ENCODE measurements at regions of chr10 and their contacts with region 1.

Region 1: DNA sequence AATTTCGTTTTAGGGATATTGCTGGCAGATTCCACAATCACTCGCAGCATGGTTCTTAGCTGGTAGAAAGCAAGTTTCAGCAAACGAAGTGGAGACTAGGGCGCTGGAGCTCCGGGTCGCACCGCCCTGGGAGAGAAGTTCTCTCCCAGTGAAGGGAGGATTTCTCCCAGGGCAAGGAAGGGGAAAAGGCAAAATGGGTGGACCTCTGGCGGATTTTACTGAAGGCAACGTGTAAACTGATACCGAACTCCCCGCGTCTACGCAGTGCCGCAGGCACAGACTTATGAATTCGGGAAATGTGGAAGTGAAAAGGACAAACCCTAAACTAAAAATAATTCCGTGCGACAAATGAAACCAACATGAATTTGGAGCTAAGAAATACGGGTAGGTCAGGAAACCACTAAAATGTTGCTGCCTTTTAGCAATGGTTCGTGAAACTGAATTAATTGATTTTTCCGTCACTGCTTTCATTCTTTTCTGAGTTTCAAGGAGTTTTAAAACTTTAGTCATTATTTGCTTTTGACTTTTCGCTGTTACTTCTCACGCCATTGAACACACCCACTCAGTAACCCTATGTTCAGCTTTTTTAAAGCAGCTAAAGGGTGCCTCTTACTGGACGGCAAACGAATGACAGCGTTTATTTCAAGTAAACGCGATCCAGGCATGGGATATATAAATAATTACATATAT is at the start of gene MYOF:
- DNase-seq: peak in 4 of 5 donors; percentile 15 to 58 (median 48)
- H3K4me3 ChIP-seq: peak within 1 kb of the TSS; percentile 42
- H3K4me3 Mint-ChIP-seq: peak within 1 kb of the TSS; percentile 78 to 90 (median 84)
- H3K27ac ChIP-seq: no peak within 1 kb of the TSS
- H3K27ac Mint-ChIP-seq: peak within 1 kb of the TSS in 3 of 8 donors; percentile 2 to 8 (median 8)
- H3K4me1 ChIP-seq: peaks cover 6% of the 10 kb centered on the region
- H3K4me1 Mint-ChIP-seq: peaks cover 7 to 12% (median 11%) of the 10 kb centered on the region in 3 donors
- H3K27me3 ChIP-seq: peaks cover 10% of the 10 kb centered on the region
- H3K27me3 Mint-ChIP-seq: peaks cover 21 to 38% of the 10 kb centered on the region in 2 donors
- total RNA-seq, gene MYOF: 57.0 to 62.8 TPM

Region 2: GRCh38 chr10:93368210-93368609 is 114.1 kb before region 1 on chr10:
- CTCF ChIA-PET with region 1: interaction called, 220 read pairs
- POLR2A ChIA-PET with region 1: no interaction called
- DNase-seq: no peak
- H3K4me3 ChIP-seq: no peak overlapping the region
- H3K4me3 Mint-ChIP-seq: no peak overlapping the region
- H3K27ac ChIP-seq: no peak overlapping the region
- H3K27ac Mint-ChIP-seq: no peak overlapping the region
- H3K4me1 ChIP-seq: no peaks in the 10 kb centered on the region
- H3K4me1 Mint-ChIP-seq: peaks cover 0 to 4% (median 3%) of the 10 kb centered on the region in 3 donors
- H3K27me3 ChIP-seq: no peaks in the 10 kb centered on the region
- H3K27me3 Mint-ChIP-seq: no peaks in the 10 kb centered on the region

Region 3: GRCh38 chr10:93386631-93387369 is 95.5 kb before region 1 on chr10:
- CTCF ChIA-PET with region 1: interaction called, 220 read pairs
- POLR2A ChIA-PET with region 1: no interaction called
- DNase-seq: peak in 2 of 5 donors; percentile 4 to 45
- H3K4me3 ChIP-seq: no peak overlapping the region
- H3K4me3 Mint-ChIP-seq: peak overlapping the region; percentile 32 to 81 (median 57)
- H3K27ac ChIP-seq: no peak overlapping the region
- H3K27ac Mint-ChIP-seq: peak overlapping the region; percentile 48 to 92 (median 78)
- H3K4me1 ChIP-seq: peaks cover 11% of the 10 kb centered on the region
- H3K4me1 Mint-ChIP-seq: peaks cover 15 to 21% (median 18%) of the 10 kb centered on the region in 3 donors
- H3K27me3 ChIP-seq: no peaks in the 10 kb centered on the region
- H3K27me3 Mint-ChIP-seq: peaks cover 0 to 2% of the 10 kb centered on the region in 2 donors

Region 4: DNA sequence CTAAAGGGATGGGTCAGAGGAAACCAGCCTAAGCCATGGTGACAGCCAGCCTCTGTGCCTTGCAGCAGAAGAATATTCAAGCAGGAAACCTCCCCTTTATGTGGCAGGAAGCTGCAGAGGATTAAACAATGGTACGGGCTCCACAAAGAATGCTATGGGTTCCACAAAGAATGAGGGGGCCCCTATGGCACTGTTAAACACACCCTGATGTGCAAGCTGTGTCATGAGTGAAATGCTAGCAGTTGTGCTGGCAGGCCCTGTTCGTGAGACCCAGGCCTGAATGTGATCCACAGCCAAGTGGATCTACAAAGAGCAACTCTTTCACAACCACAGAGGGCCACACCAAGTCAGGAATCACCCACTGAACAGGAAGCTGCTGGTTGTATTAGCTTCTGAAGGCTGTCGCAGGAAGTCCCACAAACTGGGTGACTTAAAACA is 69.0 kb before region 1 on chr10:
- CTCF ChIA-PET with region 1: interaction called, 14 read pairs
- POLR2A ChIA-PET with region 1: no interaction called
- DNase-seq: peak in 4 of 5 donors; percentile 3 to 62 (median 47)
- H3K4me3 ChIP-seq: peak overlapping the region; percentile 2
- H3K4me3 Mint-ChIP-seq: peak overlapping the region in 6 of 7 donors; percentile 49 to 71 (median 68)
- H3K27ac ChIP-seq: no peak overlapping the region
- H3K27ac Mint-ChIP-seq: peak overlapping the region; percentile 82 to 95 (median 92)
- H3K4me1 ChIP-seq: peaks cover 61% of the 10 kb centered on the region
- H3K4me1 Mint-ChIP-seq: peaks cover 45 to 55% (median 50%) of the 10 kb centered on the region in 3 donors
- H3K27me3 ChIP-seq: no peaks in the 10 kb centered on the region
- H3K27me3 Mint-ChIP-seq: no peaks in the 10 kb centered on the region

Region 5: GRCh38 chr10:93496322-93497041 is 14.2 kb after region 1 on chr10 and contains the start of gene CEP55:
- CTCF ChIA-PET with region 1: interaction called, 17 read pairs
- POLR2A ChIA-PET with region 1: no interaction called
- DNase-seq: peak; percentile 93 to 96 (median 94)
- H3K4me3 ChIP-seq: peak within 1 kb of the TSS; percentile 95
- H3K4me3 Mint-ChIP-seq: peak within 1 kb of the TSS; percentile 91 to 96 (median 93)
- H3K27ac ChIP-seq: peak within 1 kb of the TSS; percentile 52
- H3K27ac Mint-ChIP-seq: peak within 1 kb of the TSS; percentile 61 to 88 (median 82)
- H3K4me1 ChIP-seq: peaks cover 12% of the 10 kb centered on the region
- H3K4me1 Mint-ChIP-seq: peaks cover 18 to 40% (median 24%) of the 10 kb centered on the region in 3 donors
- H3K27me3 ChIP-seq: no peaks in the 10 kb centered on the region
- H3K27me3 Mint-ChIP-seq: peaks cover 1 to 5% of the 10 kb centered on the region in 2 donors
- total RNA-seq, gene CEP55: 41.2 to 44.4 TPM

Region 6: GRCh38 chr10:93512565-93512964 is 30.3 kb after region 1 on chr10:
- CTCF ChIA-PET with region 1: interaction called, 15 read pairs
- POLR2A ChIA-PET with region 1: no interaction called
- DNase-seq: no peak
- H3K4me3 ChIP-seq: no peak overlapping the region
- H3K4me3 Mint-ChIP-seq: no peak overlapping the region
- H3K27ac ChIP-seq: no peak overlapping the region
- H3K27ac Mint-ChIP-seq: no peak overlapping the region
- H3K4me1 ChIP-seq: no peaks in the 10 kb centered on the region
- H3K4me1 Mint-ChIP-seq: peaks cover 3 to 5% (median 4%) of the 10 kb centered on the region in 3 donors
- H3K27me3 ChIP-seq: no peaks in the 10 kb centered on the region
- H3K27me3 Mint-ChIP-seq: no peaks in the 10 kb centered on the region

Region 7: DNA sequence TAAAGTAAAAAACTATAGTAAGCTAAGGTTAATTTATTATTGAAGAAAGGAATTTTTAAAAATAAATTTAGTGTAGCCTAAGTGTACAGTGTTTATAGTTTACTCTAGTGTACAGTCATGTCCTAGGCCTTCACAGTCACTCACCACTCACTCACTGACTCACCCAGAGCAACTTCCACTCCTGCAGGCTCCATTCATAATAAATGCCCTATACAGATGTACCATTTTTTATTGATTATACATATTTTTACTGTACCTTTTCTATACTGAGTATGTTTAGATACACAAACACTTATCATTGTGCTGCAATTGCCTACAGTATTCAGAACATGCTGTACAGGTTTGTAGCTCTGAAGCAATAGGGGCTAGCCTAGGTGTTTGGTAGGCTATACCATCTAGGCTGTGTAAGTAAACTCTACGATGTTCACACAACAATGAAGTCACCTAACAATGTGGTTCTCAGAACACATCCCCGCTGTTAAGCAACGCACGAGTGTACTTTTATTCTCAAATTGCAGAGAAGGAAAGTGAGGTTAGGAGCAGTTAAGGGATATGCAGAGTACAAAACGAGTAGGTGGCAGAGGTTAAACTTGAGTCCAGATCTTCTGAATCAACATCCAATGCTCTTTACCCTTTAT is 472.6 kb after region 1 on chr10:
- CTCF ChIA-PET with region 1: no interaction called
- POLR2A ChIA-PET with region 1: no interaction called
- DNase-seq: no peak
- H3K4me3 ChIP-seq: no peak overlapping the region
- H3K4me3 Mint-ChIP-seq: no peak overlapping the region
- H3K27ac ChIP-seq: no peak overlapping the region
- H3K27ac Mint-ChIP-seq: no peak overlapping the region
- H3K4me1 ChIP-seq: no peaks in the 10 kb centered on the region
- H3K4me1 Mint-ChIP-seq: no peaks in the 10 kb centered on the region
- H3K27me3 ChIP-seq: no peaks in the 10 kb centered on the region
- H3K27me3 Mint-ChIP-seq: peaks cover 0 to 1% of the 10 kb centered on the region in 2 donors